GM12878 (cell line): ENCODE measurements at regions of chr19 and their contacts with region 1.

Region 1: DNA sequence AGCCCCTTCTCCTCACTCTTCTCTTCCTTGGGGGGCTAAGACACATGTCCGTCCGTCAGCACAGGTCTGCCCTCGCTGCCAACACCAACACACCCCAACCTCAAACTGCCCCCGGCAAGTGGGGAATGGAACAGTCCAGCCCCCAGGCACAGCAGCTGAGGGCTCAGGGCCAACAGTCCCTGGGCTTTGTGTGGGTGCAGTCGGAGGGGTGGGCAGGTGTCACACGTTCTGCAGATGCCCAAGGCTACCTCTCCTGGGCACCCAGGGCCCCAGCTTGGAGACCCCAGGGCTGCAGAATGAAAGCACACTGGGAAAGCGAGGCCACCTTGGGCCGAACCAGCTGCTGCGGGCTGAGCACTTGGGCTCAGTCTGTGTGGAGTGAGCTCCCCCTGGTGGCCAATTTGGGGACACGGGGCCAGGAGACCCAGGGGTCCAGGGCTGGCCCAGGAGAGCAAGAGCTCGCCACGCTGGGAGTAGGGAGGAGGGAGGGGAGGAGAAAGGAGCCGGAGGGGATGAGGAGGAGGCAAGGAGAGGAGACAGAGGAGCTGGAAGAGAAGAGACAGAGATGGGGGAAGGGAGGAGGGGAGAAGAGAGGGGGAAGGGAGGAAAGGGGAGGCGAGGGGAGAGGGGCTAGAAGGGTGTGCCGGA is 14.0 kb upstream of the ATP8B3 start:
- DNase-seq: no peak
- ATAC-seq: peak; percentile 96
- H3K4me3 ChIP-seq: no peak overlapping the region
- H3K27ac ChIP-seq: no peak overlapping the region
- H3K4me1 ChIP-seq: no peaks in the 10 kb centered on the region
- H3K27me3 ChIP-seq: no peaks in the 10 kb centered on the region
- CTCF ChIP-seq: peak; percentile 85 to 94 (median 92)
- EP300 ChIP-seq: no peak
- POLR2A ChIP-seq: no peak
- RAD21 ChIP-seq: peak; percentile 62

Region 2: DNA sequence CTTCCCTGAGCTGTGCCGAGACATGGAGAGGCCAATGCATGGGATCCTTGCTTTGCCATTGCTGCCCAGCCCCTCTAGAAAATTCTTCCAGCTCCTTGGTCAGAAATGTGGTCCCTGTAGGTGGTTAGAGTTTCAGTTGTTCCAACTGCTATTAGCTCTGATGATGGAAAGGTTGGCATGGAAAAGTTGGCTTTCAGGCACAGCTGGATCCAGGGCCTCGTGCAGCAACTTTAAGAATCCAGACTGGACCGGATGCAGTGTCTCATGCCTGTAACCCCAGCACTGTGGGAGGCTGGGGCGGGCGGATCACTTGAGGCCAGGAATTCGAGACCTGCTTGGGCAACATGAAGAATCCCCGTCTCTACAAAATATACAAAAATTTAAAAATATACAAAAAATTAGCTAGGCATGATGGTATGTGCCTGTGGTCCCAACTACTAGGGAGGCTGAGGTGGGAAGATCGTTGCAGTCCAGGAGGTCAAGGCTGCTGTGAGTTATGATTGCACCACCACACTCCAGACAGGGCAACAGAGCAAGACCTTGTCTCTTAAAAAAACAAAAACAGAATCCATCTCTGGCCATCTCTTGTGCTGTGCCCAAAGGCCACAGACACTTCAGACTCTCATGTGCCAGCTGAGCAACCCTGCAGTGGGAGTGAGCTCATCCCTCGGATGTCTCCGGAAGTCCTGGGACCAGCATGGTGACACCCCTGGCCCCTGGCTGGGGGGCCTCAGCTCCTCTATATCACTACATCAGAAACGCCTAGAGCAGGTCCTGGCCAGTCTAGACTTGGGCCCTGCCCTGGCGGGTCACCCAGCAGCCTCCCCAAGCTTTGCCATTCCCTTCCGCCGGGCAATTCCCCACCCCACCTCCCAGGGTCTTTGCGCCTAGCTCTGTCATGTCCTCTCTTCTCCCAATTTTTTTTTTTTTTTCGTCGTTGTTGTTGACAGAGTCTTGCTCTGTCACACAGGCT is 274.7 kb before region 1 on chr19:
- CTCF ChIA-PET with region 1: interaction called, 12 read pairs
- POLR2A ChIA-PET with region 1: no interaction called
- RAD21 ChIA-PET with region 1: interaction called, 4 read pairs
- SMC1A ChIA-PET with region 1: interaction called, 8 read pairs
- in situ Hi-C with region 1: no loop called
- intact Hi-C with region 1: no loop called
- DNase-seq: no peak
- ATAC-seq: no peak
- H3K4me3 ChIP-seq: no peak overlapping the region
- H3K27ac ChIP-seq: no peak overlapping the region
- H3K4me1 ChIP-seq: no peaks in the 10 kb centered on the region
- H3K27me3 ChIP-seq: no peaks in the 10 kb centered on the region
- CTCF ChIP-seq: no peak
- EP300 ChIP-seq: no peak
- POLR2A ChIP-seq: no peak
- RAD21 ChIP-seq: no peak

Region 3: GRCh38 chr19:1767464-1767933 is 58.5 kb before region 1 on chr19:
- CTCF ChIA-PET with region 1: interaction called, 10 read pairs
- POLR2A ChIA-PET with region 1: no interaction called
- RAD21 ChIA-PET with region 1: no interaction called
- SMC1A ChIA-PET with region 1: no interaction called
- in situ Hi-C with region 1: no loop called
- intact Hi-C with region 1: no loop called
- DNase-seq: no peak
- ATAC-seq: peak; percentile 88
- H3K4me3 ChIP-seq: no peak overlapping the region
- H3K27ac ChIP-seq: no peak overlapping the region
- H3K4me1 ChIP-seq: no peaks in the 10 kb centered on the region
- H3K27me3 ChIP-seq: peaks cover 6 to 10% of the 10 kb centered on the region in 2 experiments; a peak in 3 of 4 replicates
- CTCF ChIP-seq: peak; percentile 87 to 98 (median 91)
- EP300 ChIP-seq: no peak
- POLR2A ChIP-seq: no peak
- RAD21 ChIP-seq: peak; percentile 85

Region 4: GRCh38 chr19:1780272-1780958 is 45.6 kb before region 1 on chr19:
- CTCF ChIA-PET with region 1: interaction called, 16 read pairs
- POLR2A ChIA-PET with region 1: no interaction called
- RAD21 ChIA-PET with region 1: no interaction called
- SMC1A ChIA-PET with region 1: no interaction called
- in situ Hi-C with region 1: no loop called
- intact Hi-C with region 1: no loop called
- DNase-seq: no peak
- ATAC-seq: no peak
- H3K4me3 ChIP-seq: no peak overlapping the region
- H3K27ac ChIP-seq: no peak overlapping the region
- H3K4me1 ChIP-seq: no peaks in the 10 kb centered on the region
- H3K27me3 ChIP-seq: peaks cover 6 to 10% of the 10 kb centered on the region in 2 experiments
- CTCF ChIP-seq: no peak
- EP300 ChIP-seq: no peak
- POLR2A ChIP-seq: no peak
- RAD21 ChIP-seq: 0 out of 2 replicates have a peak, but pooled peaks have one; percentile 5

Region 5: DNA sequence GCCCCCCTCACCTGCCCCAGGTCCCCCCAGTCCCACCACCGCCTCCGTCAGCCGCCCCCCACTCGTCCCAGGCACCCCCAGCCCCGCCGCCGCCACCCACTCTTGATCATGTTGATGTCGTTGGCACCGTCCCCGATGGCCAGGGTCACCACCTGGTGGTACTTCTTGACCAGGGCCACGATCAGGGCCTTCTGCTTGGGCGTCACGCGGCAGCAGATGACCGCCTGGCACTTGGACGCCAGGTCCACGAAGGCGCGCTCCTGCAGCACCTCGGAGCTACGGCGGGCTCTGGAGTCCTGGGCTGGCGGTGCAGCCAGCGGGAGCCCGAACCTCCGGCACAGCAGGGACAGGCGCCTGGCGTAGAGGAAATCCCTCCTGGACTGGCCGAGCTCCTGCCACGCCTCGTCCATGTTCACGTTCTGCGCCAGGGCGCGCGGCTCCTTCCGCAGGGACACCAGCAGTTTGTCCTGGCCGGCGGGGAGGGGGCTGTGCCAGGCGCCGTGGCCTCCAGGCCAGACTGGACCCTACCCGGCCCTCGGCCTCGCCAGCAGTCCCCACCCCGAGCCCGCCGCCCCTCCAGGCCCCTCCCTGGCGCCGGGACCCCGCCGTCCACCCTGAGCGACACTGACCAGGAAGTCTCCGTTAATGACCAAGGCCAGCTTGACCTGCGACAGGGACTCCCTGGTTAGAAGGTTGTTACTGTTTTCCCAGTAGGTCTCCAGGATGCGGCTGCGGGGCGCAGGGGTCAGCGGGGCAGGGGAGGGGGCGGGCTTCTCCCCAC is 36.6 kb before region 1 on chr19:
- CTCF ChIA-PET with region 1: interaction called, 10 read pairs
- POLR2A ChIA-PET with region 1: no interaction called
- RAD21 ChIA-PET with region 1: no interaction called
- SMC1A ChIA-PET with region 1: no interaction called
- in situ Hi-C with region 1: no loop called
- intact Hi-C with region 1: no loop called
- DNase-seq: no peak
- ATAC-seq: no peak
- H3K4me3 ChIP-seq: no peak overlapping the region
- H3K27ac ChIP-seq: no peak overlapping the region
- H3K4me1 ChIP-seq: no peaks in the 10 kb centered on the region
- H3K27me3 ChIP-seq: no peaks in the 10 kb centered on the region
- CTCF ChIP-seq: no peak
- EP300 ChIP-seq: no peak
- POLR2A ChIP-seq: no peak
- RAD21 ChIP-seq: no peak

Region 6: DNA sequence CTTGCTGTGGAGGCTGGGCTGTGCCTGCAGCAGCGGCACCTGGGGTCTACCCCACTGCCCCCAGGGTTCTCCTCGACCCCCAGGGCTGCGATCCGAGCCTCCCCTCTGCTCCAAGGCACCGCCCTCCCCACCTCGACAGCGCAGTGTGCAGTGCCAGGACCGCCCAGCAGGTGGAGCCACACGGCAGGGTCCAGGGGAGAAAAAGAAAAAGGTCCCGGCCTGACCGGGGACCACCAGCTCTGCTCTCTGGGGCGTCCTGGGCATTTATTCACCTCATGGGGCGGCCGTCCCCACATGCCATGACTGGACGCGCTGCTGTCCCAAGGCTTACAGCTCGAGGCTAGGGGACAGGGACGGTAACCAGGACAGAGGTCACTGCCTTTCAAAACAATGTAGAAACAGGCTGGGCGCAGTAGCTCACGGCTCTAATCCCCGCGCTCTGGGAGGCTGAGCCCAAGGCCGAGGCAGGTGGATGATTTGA is 11.6 kb after region 1 on chr19:
- CTCF ChIA-PET with region 1: interaction called, 27 read pairs
- POLR2A ChIA-PET with region 1: interaction called, 4 read pairs
- RAD21 ChIA-PET with region 1: no interaction called
- SMC1A ChIA-PET with region 1: no interaction called
- in situ Hi-C with region 1: no loop called
- intact Hi-C with region 1: no loop called
- DNase-seq: no peak
- ATAC-seq: peak; percentile 87
- H3K4me3 ChIP-seq: no peak overlapping the region
- H3K27ac ChIP-seq: no peak overlapping the region
- H3K4me1 ChIP-seq: no peaks in the 10 kb centered on the region
- H3K27me3 ChIP-seq: no peaks in the 10 kb centered on the region
- CTCF ChIP-seq: peak; percentile 82 to 98 (median 96)
- EP300 ChIP-seq: no peak
- POLR2A ChIP-seq: no peak; the same call in 1 of the 2 replicates
- RAD21 ChIP-seq: peak; percentile 52

Region 7: DNA sequence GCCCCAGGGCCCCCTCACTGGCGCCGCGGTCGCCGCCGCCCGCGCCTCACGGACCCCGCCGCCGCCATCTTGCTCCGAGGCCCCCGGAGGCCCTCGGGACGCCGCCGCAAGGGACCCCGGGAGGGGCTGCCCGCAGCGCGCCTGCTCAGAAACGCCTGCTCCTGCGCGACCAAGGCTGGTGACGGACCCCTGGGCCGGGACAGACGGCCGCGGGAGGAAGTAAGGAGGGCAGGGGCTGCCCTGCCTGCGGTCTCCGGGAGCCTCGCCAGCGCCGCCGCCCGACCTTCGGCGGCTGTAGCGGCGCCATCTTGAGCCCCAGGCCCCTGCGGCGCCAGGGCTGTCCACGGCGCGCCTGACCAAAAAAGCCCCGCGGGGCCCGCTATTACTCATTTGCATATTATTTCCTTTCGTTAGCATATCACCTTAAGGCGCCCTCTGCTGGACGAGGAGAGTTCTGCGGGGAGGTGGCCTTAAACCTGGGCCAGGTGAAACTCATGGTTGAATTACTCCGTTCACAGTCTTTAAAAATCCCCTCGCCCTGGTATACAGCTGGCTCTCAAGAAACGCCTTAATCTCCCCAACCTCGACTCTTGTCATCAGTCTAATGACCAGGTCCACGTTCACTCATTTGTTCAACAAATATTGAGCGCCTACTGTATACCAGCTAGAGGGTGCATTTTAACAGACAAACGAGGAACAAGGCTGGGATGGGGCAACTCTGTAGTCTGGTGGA is 22.5 kb after region 1 on chr19 and contains the start of gene REXO1:
- CTCF ChIA-PET with region 1: interaction called, 13 read pairs
- POLR2A ChIA-PET with region 1: no interaction called
- RAD21 ChIA-PET with region 1: no interaction called
- SMC1A ChIA-PET with region 1: no interaction called
- in situ Hi-C with region 1: no loop called
- intact Hi-C with region 1: no loop called
- DNase-seq: peak; percentile 72
- ATAC-seq: peak; percentile 81
- H3K4me3 ChIP-seq: peak within 1 kb of the TSS; percentile 89
- H3K27ac ChIP-seq: peak within 1 kb of the TSS; percentile 100
- H3K4me1 ChIP-seq: peaks cover 29% of the 10 kb centered on the region
- H3K27me3 ChIP-seq: no peaks in the 10 kb centered on the region
- CTCF ChIP-seq: peak; percentile 82 to 94 (median 84)
- EP300 ChIP-seq: no peak
- POLR2A ChIP-seq: peak; percentile 88
- RAD21 ChIP-seq: no peak
- polyA plus RNA-seq, gene REXO1: 0.03 to 0.64 TPM

Region 8: GRCh38 chr19:1893791-1894190 is 67.8 kb after region 1 on chr19:
- CTCF ChIA-PET with region 1: no interaction called
- POLR2A ChIA-PET with region 1: no interaction called
- RAD21 ChIA-PET with region 1: no interaction called
- SMC1A ChIA-PET with region 1: no interaction called
- in situ Hi-C with region 1: no loop called
- intact Hi-C with region 1: no loop called
- DNase-seq: no peak
- ATAC-seq: no peak
- H3K4me3 ChIP-seq: no peak overlapping the region
- H3K27ac ChIP-seq: no peak overlapping the region
- H3K4me1 ChIP-seq: peaks cover 23% of the 10 kb centered on the region
- H3K27me3 ChIP-seq: no peaks in the 10 kb centered on the region
- CTCF ChIP-seq: no peak
- EP300 ChIP-seq: no peak
- POLR2A ChIP-seq: no peak
- RAD21 ChIP-seq: no peak